RWPE1 (cell line): ENCODE measurements at regions of chr1 and their contacts with region 1.

Region 1: DNA sequence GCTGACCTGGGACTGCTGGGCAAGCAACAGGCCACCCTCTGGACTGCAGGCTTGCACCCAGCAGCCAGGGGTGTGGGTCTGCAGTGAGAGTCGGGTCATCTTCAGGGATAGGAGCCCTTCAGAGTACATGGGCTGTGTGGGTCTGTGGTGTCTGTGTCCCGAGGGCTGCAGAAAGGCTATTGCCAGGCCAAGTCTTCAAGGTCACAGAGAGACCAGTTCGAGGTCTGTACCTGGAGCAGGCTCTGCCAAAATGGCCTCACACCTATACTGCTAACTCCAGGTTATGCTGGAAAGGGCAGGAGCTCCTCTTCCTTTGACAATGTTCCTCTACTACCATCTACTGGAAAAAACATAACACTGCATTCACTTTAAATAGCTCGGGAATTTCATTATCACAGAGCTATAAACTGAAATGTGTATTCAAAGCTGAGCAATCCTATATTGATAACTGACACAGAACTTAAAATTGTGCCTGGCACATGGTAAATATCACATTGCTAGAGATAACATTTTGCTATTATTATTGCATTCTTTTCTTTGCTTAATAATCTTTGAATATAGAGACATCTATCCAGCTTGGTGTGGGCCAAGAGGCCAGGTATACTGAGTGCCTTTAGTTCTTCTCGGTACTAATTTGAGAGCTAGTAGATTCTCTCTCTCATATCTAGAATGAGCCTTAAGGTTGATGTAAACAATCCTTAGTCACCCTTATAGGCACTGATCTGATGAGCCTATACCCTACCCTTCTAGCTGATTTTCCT is 6.9 kb upstream of the DNAH14 start:
- DNase-seq: peak; percentile 65
- H3K27ac ChIP-seq: no peak overlapping the region
- CTCF ChIP-seq: peak; percentile 87

Region 2: GRCh38 chr1:224497714-224498573 is 424.6 kb before region 1 on chr1:
- CTCF ChIA-PET with region 1: interaction called, 10 read pairs
- POLR2A ChIA-PET with region 1: no interaction called
- DNase-seq: peak; percentile 90
- H3K27ac ChIP-seq: peak overlapping the region; percentile 99
- CTCF ChIP-seq: no peak

Region 3: GRCh38 chr1:224828691-224829090 is 93.9 kb before region 1 on chr1:
- CTCF ChIA-PET with region 1: no interaction called
- POLR2A ChIA-PET with region 1: no interaction called
- DNase-seq: no peak
- H3K27ac ChIP-seq: no peak overlapping the region
- CTCF ChIP-seq: no peak

Region 4: DNA sequence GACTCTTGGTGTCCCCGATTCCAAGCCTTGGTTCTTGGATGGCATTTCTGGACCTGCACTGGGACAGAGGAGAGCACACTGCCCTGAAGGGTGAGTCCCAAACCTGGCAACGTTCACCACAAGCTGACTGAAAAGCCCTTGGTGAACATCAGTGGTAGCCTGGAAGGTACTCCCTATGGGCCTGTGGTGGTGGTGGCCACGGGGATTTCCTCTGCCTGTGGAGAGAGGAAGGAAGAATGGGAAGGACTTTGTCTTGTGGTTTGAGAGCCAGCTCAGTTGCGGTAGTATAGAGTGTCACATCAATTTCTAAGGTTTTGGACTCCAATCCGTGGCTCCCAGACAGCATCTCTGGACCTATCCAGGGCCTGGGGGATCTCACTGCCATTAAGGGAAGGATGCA is 57.6 kb after region 1 on chr1:
- CTCF ChIA-PET with region 1: no interaction called
- POLR2A ChIA-PET with region 1: no interaction called
- DNase-seq: no peak
- H3K27ac ChIP-seq: no peak overlapping the region
- CTCF ChIP-seq: no peak

Region 5: GRCh38 chr1:224996266-224996665 is 73.7 kb after region 1 on chr1:
- CTCF ChIA-PET with region 1: no interaction called
- POLR2A ChIA-PET with region 1: no interaction called
- DNase-seq: no peak
- H3K27ac ChIP-seq: no peak overlapping the region
- CTCF ChIP-seq: no peak